CD8-positive, alpha-beta T cell (primary cell): ENCODE measurements at regions of chr10 and their contacts with region 1.

Region 1: DNA sequence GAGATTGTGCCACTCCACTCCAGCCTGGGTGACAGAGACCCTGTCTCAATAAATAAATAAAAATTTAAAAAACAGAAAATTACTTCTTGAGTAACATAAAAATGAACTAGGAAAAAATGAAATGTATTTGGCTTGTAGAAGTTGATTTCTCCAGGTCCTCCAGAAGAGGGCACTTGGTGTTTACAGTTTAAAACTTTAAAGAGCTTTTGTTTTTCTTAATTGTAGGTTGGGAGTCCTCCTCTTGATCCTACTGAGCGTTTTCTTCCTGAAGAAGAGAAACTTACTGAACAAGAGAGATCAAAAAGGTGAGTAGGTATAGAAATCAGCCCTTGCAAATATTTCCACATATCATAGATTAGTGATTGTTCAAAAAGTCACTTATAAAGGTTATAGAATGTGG is 16.2 kb downstream of the KIFBP start:
- DNase-seq: peak in 2 of 9 experiments; percentile 61 to 74
- ATAC-seq: peak; percentile 87
- H3K4me3 ChIP-seq: no peak overlapping the region
- H3K4me3 Mint-ChIP-seq: no peak overlapping the region
- H3K27ac ChIP-seq: no peak overlapping the region
- H3K27ac Mint-ChIP-seq: no peak overlapping the region
- H3K4me1 ChIP-seq: no peaks in the 10 kb centered on the region
- H3K4me1 Mint-ChIP-seq: peaks cover 2% of the 10 kb centered on the region
- H3K27me3 ChIP-seq: no peaks in the 10 kb centered on the region
- H3K27me3 Mint-ChIP-seq: no peaks in the 10 kb centered on the region
- CTCF ChIP-seq: peak; percentile 76

Region 2: DNA sequence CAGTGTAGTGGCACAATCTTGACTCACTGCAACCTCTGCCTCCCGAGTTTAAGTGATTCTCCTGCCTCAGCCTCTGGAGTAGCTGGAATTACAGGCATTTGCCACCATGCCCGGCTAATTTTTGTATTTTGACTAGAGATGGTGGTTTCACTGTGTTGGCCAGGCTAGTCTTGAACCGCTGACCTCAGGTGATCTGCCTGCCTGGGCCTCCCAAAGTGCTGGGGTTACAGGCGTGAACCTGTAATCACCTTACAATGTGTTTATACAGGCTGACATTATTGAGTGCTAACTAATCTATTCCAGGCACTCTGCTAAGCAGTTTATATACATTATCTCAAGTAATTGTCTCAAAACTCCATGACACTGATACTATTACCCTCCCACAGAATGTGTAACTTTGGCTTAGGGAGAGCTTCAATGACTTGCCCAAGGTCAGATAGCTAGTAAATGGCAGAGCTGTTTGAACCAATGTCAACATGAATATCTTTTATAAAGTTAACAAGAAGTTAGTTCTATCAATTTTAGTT is 20.6 kb after region 1 on chr10:
- CTCF ChIA-PET with region 1: no interaction called
- POLR2A ChIA-PET with region 1: no interaction called
- intact Hi-C with region 1: no loop called
- DNase-seq: no peak
- ATAC-seq: no peak
- H3K4me3 ChIP-seq: no peak overlapping the region
- H3K4me3 Mint-ChIP-seq: no peak overlapping the region
- H3K27ac ChIP-seq: no peak overlapping the region
- H3K27ac Mint-ChIP-seq: no peak overlapping the region
- H3K4me1 ChIP-seq: no peaks in the 10 kb centered on the region
- H3K4me1 Mint-ChIP-seq: peaks cover 8% of the 10 kb centered on the region
- H3K27me3 ChIP-seq: no peaks in the 10 kb centered on the region
- H3K27me3 Mint-ChIP-seq: no peaks in the 10 kb centered on the region
- CTCF ChIP-seq: no peak

Region 3: GRCh38 chr10:69101451-69102095 is 96.8 kb after region 1 on chr10:
- CTCF ChIA-PET with region 1: interaction called, 153 read pairs
- POLR2A ChIA-PET with region 1: no interaction called
- intact Hi-C with region 1: no loop called
- DNase-seq: peak in 6 of 9 experiments; percentile 19 to 67 (median 40)
- ATAC-seq: peak; percentile 45
- H3K4me3 ChIP-seq: no peak overlapping the region
- H3K4me3 Mint-ChIP-seq: peak overlapping the region; percentile 52
- H3K27ac ChIP-seq: peak overlapping the region in 1 of 2 experiments; percentile 60
- H3K27ac Mint-ChIP-seq: peak overlapping the region; percentile 70
- H3K4me1 ChIP-seq: peaks cover 17% of the 10 kb centered on the region
- H3K4me1 Mint-ChIP-seq: peaks cover 41% of the 10 kb centered on the region
- H3K27me3 ChIP-seq: no peaks in the 10 kb centered on the region
- H3K27me3 Mint-ChIP-seq: no peaks in the 10 kb centered on the region
- CTCF ChIP-seq: no peak

Region 4: DNA sequence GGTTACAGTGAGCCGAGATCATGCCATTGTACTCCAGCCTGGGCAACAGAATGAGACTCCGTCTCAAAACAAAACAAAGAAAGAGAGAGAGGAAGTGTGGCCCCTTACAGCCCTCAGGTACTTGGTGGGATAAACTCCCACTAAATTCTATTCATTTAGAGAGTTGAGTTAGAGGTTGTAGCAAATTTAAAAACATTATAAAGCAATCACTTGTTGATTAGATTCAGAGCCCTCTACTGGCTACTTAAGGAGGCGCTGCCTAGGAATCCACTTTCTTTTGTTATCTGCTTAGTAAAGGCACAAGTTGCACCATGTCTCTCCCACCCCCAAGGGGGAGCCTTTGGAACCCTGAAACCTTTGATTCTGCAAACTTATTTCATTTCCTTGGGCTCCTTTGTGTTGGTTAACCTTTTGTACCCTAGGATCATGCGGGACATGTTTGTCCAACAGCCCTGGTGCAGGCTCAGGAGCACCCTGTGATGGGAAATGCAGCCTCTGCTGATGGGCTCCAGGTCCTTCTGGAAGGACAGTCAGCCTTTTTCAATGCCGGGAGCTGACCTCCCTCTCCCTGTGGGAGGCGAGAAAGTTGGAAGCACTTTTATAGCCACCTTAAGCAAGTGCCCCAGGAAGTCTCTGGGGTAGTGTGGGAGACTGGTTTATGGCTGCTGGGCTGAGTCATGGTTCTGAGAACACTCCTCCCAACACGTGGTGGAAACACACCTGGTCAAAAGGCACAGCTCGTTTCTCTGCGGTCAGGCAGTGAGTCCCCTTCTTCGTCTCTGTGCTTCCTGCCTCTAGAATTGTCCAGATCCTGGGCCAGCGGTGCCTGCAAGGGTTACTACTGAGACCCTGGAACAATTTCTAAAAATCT is 217.6 kb after region 1 on chr10:
- CTCF ChIA-PET with region 1: interaction called, 4 read pairs
- POLR2A ChIA-PET with region 1: no interaction called
- intact Hi-C with region 1: loop called (anchors 1 kb)
- DNase-seq: peak in 8 of 9 experiments; percentile 36 to 83 (median 68)
- ATAC-seq: peak; percentile 84
- H3K4me3 ChIP-seq: peak overlapping the region in 1 of 2 experiments; percentile 39
- H3K4me3 Mint-ChIP-seq: peak overlapping the region; percentile 57
- H3K27ac ChIP-seq: peak overlapping the region in 1 of 2 experiments; percentile 60
- H3K27ac Mint-ChIP-seq: peak overlapping the region; percentile 73
- H3K4me1 ChIP-seq: peaks cover 20% of the 10 kb centered on the region
- H3K4me1 Mint-ChIP-seq: peaks cover 32% of the 10 kb centered on the region
- H3K27me3 ChIP-seq: no peaks in the 10 kb centered on the region
- H3K27me3 Mint-ChIP-seq: no peaks in the 10 kb centered on the region
- CTCF ChIP-seq: peak; percentile 87